Breast epithelium (tissue), 4 donors: ENCODE measurements at regions of chr19 and their contacts with region 1.

Region 1: DNA sequence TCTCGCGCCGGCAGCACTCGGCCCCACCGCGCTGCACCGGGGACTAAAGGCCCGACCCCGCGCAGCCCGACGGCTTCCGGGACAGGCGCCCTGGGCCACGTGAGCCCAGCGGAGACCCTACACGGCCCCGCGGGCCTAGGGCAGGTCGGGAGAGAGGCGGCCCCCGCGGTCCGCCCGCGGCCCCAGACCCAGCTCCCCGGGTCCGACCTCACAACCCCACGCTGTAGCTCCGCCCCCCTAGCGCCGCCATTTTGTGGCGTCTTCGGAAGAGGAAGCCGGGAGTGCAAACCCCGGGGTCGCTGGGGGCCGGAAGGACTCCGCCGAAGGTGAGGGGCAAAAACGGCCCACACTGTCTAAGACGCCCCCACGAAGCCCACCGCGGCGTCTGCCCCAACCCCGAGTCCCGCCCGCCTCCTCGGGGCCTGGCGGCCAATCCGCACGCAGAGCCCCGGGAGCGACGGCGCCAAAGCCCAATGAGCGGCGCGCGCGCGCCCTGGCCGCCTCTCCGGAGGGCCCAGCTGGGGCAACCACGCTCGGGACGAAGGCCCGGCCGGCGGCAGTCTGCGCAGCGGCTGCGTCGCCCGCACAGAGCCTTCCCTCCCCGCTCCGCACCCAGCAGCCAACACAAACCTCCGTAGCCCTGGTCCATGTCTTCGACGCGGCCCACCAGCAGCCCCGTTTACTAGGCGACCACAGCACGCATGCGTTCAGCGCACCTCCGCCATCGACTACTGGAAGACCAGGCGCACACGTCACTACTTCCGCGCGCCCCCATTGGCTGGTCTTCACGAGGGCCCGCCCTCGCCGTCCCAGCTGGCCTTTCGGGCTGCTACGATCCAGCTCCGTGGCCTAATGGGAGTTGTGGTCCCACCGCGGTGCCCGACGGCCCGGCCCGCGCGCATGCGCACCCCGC is at the start of gene AKAP8:
- DNase-seq: peak; percentile 97 to 99
- H3K4me3 ChIP-seq: peak within 1 kb of the TSS; percentile 86 to 93 (median 92)
- H3K27ac ChIP-seq: peak within 1 kb of the TSS; percentile 98 to 99
- H3K4me1 ChIP-seq: peaks cover 5 to 29% of the 10 kb centered on the region in 2 donors
- H3K27me3 ChIP-seq: no peaks in the 10 kb centered on the region
- CTCF ChIP-seq: peak in 1 of 3 donors; percentile 12
- POLR2A ChIP-seq: peak; percentile 79
- total RNA-seq, gene AKAP8: 23.2 to 40.7 (median 33.4) TPM

Region 2: DNA sequence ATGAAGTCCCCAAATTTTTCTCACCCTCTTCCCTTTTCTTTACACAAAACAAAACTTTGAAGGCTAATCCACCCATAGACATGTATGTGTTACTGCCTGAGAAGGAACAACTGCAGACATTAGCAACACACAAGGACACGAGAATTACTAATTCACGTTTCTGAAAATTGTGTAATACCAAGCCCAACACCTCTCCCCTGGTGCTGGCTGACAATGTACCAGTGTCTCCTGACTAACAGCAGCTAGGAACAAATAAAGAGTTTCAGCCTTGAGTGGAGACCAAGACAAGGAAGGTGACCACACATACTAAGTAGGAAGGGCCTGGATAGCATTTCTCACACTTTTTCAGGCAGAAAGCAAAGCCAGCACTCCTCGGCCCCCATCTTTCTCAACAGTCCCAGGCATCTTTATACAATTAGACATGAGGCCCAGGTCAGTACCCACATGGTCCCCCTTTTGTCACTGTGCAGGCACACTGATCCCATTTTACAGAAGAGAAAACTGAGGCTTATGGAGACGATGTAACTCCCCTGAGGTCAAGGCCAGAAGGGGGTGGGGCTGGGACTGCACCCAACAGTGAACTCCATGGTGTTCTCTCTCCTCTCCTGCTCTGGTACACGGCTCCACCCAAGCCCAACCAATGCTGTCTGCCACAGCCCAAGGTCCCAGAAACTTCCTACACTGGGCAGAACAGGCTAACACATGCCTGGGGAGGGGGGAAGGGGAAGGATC is 55.7 kb before region 1 on chr19:
- intact Hi-C with region 1: loop called (anchors 10 kb)
- DNase-seq: peak in 1 of 2 donors; percentile 64
- H3K4me3 ChIP-seq: peak overlapping the region in 1 of 3 donors; percentile 9
- H3K27ac ChIP-seq: peak overlapping the region; percentile 85 to 88
- H3K4me1 ChIP-seq: peaks cover 20 to 45% of the 10 kb centered on the region in 2 donors
- H3K27me3 ChIP-seq: no peaks in the 10 kb centered on the region
- CTCF ChIP-seq: no peak
- POLR2A ChIP-seq: no peak

Region 3: GRCh38 chr19:15418588-15419412 is 39.5 kb after region 1 on chr19 and contains the start of gene AKAP8L:
- intact Hi-C with region 1: no loop called
- DNase-seq: peak; percentile 98 to 100
- H3K4me3 ChIP-seq: peak within 1 kb of the TSS; percentile 71 to 100 (median 92)
- H3K27ac ChIP-seq: peak within 1 kb of the TSS; percentile 82 to 90
- H3K4me1 ChIP-seq: peaks cover 0 to 14% of the 10 kb centered on the region in 2 donors
- H3K27me3 ChIP-seq: no peaks in the 10 kb centered on the region
- CTCF ChIP-seq: peak; percentile 23 to 57 (median 37)
- POLR2A ChIP-seq: peak; percentile 59
- total RNA-seq, gene AKAP8L: 77.6 to 141 (median 122) TPM

Region 4: DNA sequence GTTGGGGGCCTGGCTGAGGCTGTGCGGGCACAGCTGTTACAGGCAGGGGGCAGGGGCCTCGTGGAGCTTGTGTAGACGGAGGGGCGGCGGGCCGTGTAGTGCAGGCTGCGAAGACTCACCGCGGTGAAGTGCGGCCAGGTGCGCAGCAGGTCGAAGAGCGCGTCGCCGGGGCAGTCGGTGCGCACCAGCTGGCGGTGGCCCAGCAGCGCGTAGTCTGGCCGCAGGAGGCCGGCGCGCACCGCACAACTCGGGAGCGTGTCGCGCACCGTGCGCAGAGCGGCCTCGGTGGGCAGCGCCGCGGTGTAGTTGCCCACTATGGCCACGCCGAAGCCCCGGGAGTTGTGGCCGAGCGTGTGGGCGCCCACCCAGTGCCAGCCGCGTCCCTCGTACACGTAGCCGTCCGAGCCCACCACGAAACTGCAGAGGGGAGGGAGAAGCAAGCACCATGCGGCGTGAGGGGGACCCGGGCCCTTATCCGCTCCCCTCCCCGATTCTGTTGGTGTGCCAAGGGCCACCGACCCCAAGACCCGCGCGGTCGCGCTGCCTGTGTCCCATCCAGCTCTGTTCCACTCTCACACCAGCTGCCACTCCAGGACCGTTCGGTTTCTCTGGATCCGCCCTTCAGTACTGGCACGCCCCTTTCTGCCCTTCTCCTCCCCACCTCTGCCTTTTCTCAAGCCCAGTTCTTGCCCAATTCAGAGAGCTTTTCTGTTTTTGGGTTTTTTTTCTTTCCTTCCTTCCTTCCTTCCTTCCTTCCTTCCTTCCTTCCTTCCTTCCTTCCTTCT is 90.4 kb after region 1 on chr19:
- intact Hi-C with region 1: no loop called
- DNase-seq: no peak
- H3K4me3 ChIP-seq: peak overlapping the region; percentile 28 to 63 (median 38)
- H3K27ac ChIP-seq: no peak overlapping the region
- H3K4me1 ChIP-seq: no peaks in the 10 kb centered on the region
- H3K27me3 ChIP-seq: peaks cover 3 to 34% of the 10 kb centered on the region in 2 donors
- CTCF ChIP-seq: no peak
- POLR2A ChIP-seq: no peak

Region 5: GRCh38 chr19:16035601-16036297 is 656.4 kb after region 1 on chr19:
- intact Hi-C with region 1: loop called (anchors 5 kb)
- DNase-seq: peak in 1 of 2 donors; percentile 48
- H3K4me3 ChIP-seq: no peak overlapping the region
- H3K27ac ChIP-seq: no peak overlapping the region
- H3K4me1 ChIP-seq: no peaks in the 10 kb centered on the region
- H3K27me3 ChIP-seq: no peaks in the 10 kb centered on the region
- CTCF ChIP-seq: no peak
- POLR2A ChIP-seq: no peak